ENCODE measurements at regions of chrX and their contacts with region 1.

Region 1: GRCh38 chrX:24395775-24396174 is 35.3 kb downstream of the SUPT20HL1 start:
- DNase-seq: peak in 1 of 2 donors; percentile 16
- ATAC-seq: peak; percentile 81 to 94
- H3K4me3 ChIP-seq: no peak overlapping the region
- H3K27ac ChIP-seq: peak overlapping the region in 1 of 4 donors; percentile 5
- H3K4me1 ChIP-seq: no peaks in the 10 kb centered on the region
- H3K27me3 ChIP-seq: no peaks in the 10 kb centered on the region
- CTCF ChIP-seq: peak; percentile 57 to 71 (median 65)
- POLR2A ChIP-seq: no peak

Region 2: DNA sequence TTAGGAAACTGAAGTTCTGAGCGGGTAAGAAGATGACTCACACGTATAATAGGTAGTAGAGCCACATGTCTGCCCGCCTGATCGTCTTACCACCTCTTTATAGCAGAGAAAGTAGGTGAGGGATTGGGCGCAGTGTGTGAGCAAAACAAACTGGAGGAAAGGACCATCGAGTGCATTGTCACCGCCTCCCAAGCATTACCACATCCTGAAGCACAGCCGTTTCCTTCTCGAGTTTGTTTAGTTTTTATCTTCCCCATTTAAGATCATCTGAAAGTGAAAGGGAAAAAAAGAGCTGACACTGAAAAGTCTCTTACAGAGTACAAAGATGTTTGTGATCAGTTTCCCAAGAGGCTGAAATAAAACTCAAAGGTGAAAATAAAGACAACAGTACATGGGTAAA is 84.1 kb after region 1 on chrX:
- in situ Hi-C with region 1: no loop called
- intact Hi-C with region 1: no loop called
- DNase-seq: peak in 1 of 2 donors; percentile 14
- ATAC-seq: no peak
- H3K4me3 ChIP-seq: no peak overlapping the region
- H3K27ac ChIP-seq: no peak overlapping the region
- H3K4me1 ChIP-seq: no peaks in the 10 kb centered on the region
- H3K27me3 ChIP-seq: no peaks in the 10 kb centered on the region
- CTCF ChIP-seq: no peak
- POLR2A ChIP-seq: no peak

Region 3: DNA sequence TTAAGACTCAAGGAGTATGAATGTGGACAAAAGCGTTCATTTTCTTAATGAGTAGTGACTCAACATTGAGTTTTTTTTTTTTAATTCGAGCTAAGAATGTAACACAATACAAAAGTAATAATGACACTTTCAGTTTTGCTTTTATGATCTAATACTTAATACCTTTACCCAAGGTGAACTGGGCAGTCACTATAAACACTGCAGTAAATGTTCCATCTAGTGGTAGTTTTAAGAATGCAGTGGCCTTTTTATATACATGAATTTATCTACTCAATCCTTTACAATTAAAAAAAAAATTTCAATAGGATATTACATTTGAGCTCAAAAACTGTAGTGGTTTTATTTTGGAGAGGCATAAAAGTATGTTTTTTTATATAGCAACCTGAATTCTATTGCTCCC is 103.2 kb after region 1 on chrX:
- in situ Hi-C with region 1: loop called in 3 of 4 experiments (anchors 10 kb)
- intact Hi-C with region 1: loop called (anchors 1 kb)
- DNase-seq: no peak
- ATAC-seq: peak in 1 of 2 donors; percentile 49
- H3K4me3 ChIP-seq: no peak overlapping the region
- H3K27ac ChIP-seq: peak overlapping the region in 1 of 4 donors; percentile 27
- H3K4me1 ChIP-seq: peaks cover 0 to 4% of the 10 kb centered on the region in 2 donors
- H3K27me3 ChIP-seq: no peaks in the 10 kb centered on the region
- CTCF ChIP-seq: peak in 4 of 5 experiments; percentile 45 to 57 (median 50)
- POLR2A ChIP-seq: no peak

Region 4: DNA sequence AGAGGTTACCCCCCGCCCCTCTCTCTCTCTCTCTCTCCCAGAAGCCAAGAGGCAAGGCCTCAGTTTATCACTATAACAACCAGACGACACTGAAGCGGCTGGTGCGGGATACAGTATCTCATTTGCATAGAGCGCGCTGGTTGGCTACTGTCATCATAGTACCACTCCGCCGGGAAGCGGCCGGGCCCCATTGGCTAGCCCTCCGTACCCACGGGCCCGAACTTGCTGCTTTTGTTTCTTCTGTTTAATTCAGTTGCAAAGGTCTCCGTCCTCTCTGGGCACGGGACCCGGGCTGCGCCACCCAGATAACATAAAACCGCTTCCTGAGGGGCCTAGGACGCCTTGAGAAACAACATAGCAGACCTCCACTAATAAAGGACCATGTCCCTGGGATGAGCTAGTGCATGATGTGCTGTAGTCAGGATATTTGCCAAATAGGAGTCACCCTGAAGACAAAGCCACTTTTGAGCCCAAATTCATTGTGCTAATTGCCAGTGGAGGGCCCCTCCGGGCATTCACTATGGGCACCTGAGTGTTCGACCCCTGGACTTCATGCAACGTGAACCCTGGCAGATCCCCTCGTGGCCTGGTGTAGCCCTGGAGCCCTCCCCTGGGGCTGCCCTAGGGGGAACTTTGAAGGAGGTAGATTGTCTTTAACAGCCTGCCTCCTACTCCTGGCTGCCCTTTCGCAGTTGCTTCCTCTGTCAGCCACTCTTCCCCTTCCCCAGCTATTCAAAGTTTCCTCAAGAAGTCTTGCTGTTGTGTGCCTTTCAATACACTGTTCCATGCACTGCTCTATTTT is 251.7 kb after region 1 on chrX and contains the start of gene PCYT1B:
- in situ Hi-C with region 1: no loop called
- intact Hi-C with region 1: no loop called
- DNase-seq: peak; percentile 16 to 18
- ATAC-seq: peak; percentile 53 to 72
- H3K4me3 ChIP-seq: peak within 1 kb of the TSS in 3 of 4 donors; percentile 29 to 46 (median 33)
- H3K27ac ChIP-seq: no peak within 1 kb of the TSS
- H3K4me1 ChIP-seq: peaks cover 0 to 4% of the 10 kb centered on the region in 2 donors
- H3K27me3 ChIP-seq: peaks cover 0 to 8% (median 0%) of the 10 kb centered on the region in 3 donors
- CTCF ChIP-seq: no peak
- POLR2A ChIP-seq: no peak
- total RNA-seq, gene PCYT1B: 0.07 TPM in 1 of 4 donors, not detected in the others

Measured in gastrocnemius medialis (tissue), 4 donors.